ENCODE measurements at regions of chr17 and their contacts with region 1.

Region 1: DNA sequence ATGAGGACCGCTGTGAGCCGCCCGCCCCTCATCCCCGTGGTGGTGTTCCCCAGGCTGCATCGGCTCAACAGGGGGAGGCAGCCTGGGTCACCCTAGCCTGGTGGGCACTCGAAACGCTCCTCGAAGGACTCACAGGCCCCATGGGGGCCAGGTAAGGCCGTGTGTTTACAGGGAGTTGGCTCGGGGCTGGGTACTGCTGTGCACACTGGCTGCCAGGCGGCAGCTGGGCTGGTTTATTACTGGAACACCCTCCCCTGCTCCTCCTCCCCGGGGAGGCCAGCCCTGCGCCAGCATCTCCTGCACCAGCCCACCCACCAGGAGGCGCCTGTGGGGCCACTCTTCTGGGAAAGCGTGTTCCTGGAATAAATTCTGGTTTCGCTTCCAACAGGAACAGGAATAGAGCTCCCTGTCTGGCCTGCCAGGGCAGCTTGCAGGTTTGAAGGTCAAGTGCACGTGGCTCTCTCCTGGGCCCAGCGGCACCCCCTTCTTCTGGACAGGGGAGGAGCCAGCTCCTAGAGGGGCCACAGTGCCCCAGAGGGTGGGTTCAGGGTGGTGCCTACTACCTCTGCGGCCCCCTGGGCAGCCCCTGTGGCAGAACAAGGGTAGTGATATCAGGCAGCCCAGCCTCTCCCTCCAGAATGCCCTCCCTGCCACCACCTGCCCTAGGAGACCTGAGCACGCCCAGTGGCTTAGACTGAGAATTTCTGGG is 11.3 kb downstream of the MCRIP1 start:
- DNase-seq: peak; percentile 85
- ATAC-seq: peak; percentile 76 to 92 (median 90)
- H3K4me3 ChIP-seq: no peak overlapping the region
- H3K27ac ChIP-seq: peak overlapping the region; percentile 82 to 93 (median 88)
- H3K4me1 ChIP-seq: peaks cover 7 to 29% (median 23%) of the 10 kb centered on the region in 9 donors
- H3K27me3 ChIP-seq: no peaks in the 10 kb centered on the region
- CTCF ChIP-seq: peak; percentile 44 to 83 (median 72)

Region 2: GRCh38 chr17:81636505-81637288 is 185.1 kb before region 1 on chr17 and contains the starts of genes NPLOC4 and TSPAN10:
- intact Hi-C with region 1: no loop called
- DNase-seq: peak; percentile 80 to 90
- ATAC-seq: peak; percentile 84 to 94 (median 90)
- H3K4me3 ChIP-seq: peak within 1 kb of the TSS; percentile 51 to 99 (median 90)
- H3K27ac ChIP-seq: peak within 1 kb of the TSS; percentile 82 to 99 (median 96)
- H3K4me1 ChIP-seq: peaks cover 6 to 52% (median 34%) of the 10 kb centered on the region in 9 donors
- H3K27me3 ChIP-seq: no peaks in the 10 kb centered on the region
- CTCF ChIP-seq: no peak
- total RNA-seq, gene NPLOC4: 85.8 to 115 (median 98.8) TPM
- total RNA-seq, gene TSPAN10: 0.12 to 0.57 (median 0.27) TPM

Region 3: DNA sequence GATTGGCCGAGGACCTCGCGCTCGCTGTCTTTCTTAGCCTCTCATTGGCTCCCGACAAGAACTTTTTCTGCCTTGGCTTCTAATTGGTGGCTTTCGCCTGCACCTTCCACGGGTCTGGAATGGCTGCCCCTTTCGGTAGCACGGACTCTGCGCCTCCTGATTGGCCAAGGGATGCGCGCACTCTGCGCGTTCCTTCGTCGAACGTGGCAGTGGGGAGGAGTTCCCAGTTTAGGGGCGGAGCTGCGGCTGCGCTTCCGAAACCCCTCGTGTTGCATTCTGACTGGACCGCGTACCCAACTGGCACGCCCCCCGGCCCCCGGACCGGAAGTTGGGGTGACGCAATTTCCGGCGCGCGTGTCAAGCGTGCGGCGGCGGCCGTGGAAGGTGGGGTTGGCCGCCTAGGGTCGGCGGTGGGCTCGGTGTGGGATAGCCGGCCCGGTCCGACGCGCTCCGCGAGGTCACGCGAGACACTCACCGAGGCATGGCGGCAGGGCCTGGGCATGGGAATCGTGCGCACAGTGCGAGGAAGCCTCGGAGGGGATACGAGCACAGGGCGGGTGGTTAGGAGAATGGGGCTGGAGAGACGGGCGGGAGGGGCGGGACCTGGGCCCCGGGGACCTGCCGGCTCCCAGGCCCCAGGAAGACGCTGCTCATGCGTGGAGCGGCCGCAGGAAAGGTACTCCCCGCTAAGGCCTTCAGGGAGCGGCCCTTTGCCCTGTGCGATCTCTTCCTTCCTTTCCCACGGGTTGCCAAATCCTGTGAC is 39.2 kb after region 1 on chr17:
- intact Hi-C with region 1: loop called in 1 of 10 experiments (anchors 5 kb)
- DNase-seq: peak; percentile 99
- ATAC-seq: peak; percentile 90 to 98 (median 96)
- H3K4me3 ChIP-seq: peak overlapping the region; percentile 40 to 100 (median 83)
- H3K27ac ChIP-seq: peak overlapping the region; percentile 86 to 99 (median 98)
- H3K4me1 ChIP-seq: peaks cover 15 to 69% (median 45%) of the 10 kb centered on the region in 9 donors
- H3K27me3 ChIP-seq: no peaks in the 10 kb centered on the region
- CTCF ChIP-seq: peak in 4 of 9 donors; percentile 7 to 30 (median 22)